ENCODE measurements at regions of chr5 and their contacts with region 1.

Region 1: DNA sequence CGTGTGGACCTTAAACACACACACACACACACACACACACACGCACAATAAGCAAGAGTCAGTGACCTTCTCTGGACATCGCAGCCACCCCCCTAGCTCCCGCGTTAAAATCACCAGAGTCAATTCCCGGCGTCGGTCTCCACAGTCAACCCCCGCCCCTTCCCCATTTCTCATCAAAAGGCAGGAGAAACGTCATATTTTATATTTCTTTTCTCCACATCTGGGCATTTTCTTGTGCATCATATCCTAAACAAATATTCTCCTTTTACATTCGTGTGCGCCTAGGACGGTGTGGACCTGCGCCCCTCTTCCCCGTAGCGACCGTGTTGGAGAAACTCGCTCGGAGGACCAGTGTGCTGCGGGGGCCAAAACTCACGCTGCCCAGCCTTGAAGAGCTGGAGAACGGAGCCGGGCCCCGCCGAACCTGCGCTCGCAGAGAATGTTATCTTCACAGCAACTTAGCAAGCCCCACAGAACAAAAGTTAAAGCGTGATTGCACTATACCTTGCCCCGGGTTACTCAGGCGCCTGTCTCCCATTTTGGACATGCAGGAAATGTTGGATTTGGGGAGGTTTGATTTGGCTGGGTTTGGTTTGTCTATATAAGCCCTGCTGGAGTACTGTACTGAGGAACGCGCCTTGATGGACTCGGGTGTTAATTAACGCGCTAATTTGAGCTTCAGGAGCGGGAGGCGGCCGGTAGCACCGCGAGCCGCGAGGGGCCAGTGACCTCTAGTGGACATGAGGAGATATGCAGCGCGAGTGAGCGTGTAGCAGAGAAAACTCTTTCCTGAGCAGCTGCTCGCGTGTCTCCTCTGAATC is 192.4 kb downstream of the MEF2C start:
- DNase-seq: peak; percentile 79
- H3K4me3 Mint-ChIP-seq: peak overlapping the region; percentile 77
- H3K27ac Mint-ChIP-seq: no peak overlapping the region
- H3K4me1 Mint-ChIP-seq: peaks cover 34% of the 10 kb centered on the region
- H3K27me3 Mint-ChIP-seq: peaks cover 35% of the 10 kb centered on the region
- CTCF ChIP-seq: peak; percentile 97

Region 2: GRCh38 chr5:87421307-87421706 is 1269.3 kb before region 1 on chr5:
- CTCF ChIA-PET with region 1: no interaction called
- intact Hi-C with region 1: loop called (anchors 10 kb)
- DNase-seq: no peak
- H3K4me3 Mint-ChIP-seq: no peak overlapping the region
- H3K27ac Mint-ChIP-seq: no peak overlapping the region
- H3K4me1 Mint-ChIP-seq: peaks cover 9% of the 10 kb centered on the region
- H3K27me3 Mint-ChIP-seq: no peaks in the 10 kb centered on the region
- CTCF ChIP-seq: no peak

Region 3: DNA sequence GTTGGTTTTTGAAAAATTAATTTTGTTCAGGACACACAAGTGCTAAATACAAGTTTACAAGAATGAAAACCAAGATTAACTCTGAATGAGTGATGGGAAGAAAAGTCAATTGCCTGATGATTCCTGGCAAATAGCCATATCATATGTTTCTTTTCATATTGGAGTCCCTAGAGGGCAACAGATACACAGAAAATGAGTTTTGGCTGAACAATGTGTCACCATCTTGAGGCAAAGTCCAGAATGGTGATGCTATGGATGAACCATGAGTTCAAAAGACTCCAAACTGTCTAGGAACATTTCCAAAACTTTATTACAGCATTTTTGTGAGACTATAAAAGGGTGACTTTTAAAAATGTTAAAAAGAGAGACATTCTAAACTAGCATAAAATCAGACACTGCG is 804.9 kb before region 1 on chr5:
- CTCF ChIA-PET with region 1: no interaction called
- intact Hi-C with region 1: loop called (anchors 10 kb)
- DNase-seq: no peak
- H3K4me3 Mint-ChIP-seq: no peak overlapping the region
- H3K27ac Mint-ChIP-seq: no peak overlapping the region
- H3K4me1 Mint-ChIP-seq: no peaks in the 10 kb centered on the region
- H3K27me3 Mint-ChIP-seq: no peaks in the 10 kb centered on the region
- CTCF ChIP-seq: no peak

Region 4: GRCh38 chr5:88680253-88681132 is 10.1 kb before region 1 on chr5:
- CTCF ChIA-PET with region 1: interaction called, 25 read pairs
- intact Hi-C with region 1: no loop called
- DNase-seq: peak; percentile 96
- H3K4me3 Mint-ChIP-seq: peak overlapping the region; percentile 65
- H3K27ac Mint-ChIP-seq: no peak overlapping the region
- H3K4me1 Mint-ChIP-seq: peaks cover 22% of the 10 kb centered on the region
- H3K27me3 Mint-ChIP-seq: peaks cover 12% of the 10 kb centered on the region
- CTCF ChIP-seq: peak; percentile 99

Region 5: DNA sequence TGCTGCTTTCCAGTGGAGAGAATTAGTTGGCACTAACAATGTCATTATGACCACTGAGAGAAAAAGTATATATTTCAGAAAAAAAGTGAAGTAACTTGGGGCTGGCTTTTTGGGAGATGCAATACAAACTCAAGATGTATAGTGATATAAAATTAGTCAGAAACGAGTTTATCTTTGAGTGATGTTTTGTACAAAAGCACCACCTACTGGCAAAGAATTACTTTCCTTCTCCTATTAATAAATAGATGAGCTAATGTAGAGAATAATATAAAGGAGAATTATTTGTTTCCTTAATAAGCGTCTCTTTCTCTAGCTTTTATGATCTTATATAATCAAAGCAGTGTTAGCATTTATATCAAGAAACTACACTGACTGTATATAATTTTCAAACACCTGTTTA is 33.6 kb after region 1 on chr5:
- CTCF ChIA-PET with region 1: interaction called, 12 read pairs
- intact Hi-C with region 1: no loop called
- DNase-seq: no peak
- H3K4me3 Mint-ChIP-seq: no peak overlapping the region
- H3K27ac Mint-ChIP-seq: no peak overlapping the region
- H3K4me1 Mint-ChIP-seq: no peaks in the 10 kb centered on the region
- H3K27me3 Mint-ChIP-seq: no peaks in the 10 kb centered on the region
- CTCF ChIP-seq: peak; percentile 43

Measured in Calu3 (cell line).